Natural killer cell (primary cell): ENCODE measurements at regions of chr6 and their contacts with region 1.

Region 1: DNA sequence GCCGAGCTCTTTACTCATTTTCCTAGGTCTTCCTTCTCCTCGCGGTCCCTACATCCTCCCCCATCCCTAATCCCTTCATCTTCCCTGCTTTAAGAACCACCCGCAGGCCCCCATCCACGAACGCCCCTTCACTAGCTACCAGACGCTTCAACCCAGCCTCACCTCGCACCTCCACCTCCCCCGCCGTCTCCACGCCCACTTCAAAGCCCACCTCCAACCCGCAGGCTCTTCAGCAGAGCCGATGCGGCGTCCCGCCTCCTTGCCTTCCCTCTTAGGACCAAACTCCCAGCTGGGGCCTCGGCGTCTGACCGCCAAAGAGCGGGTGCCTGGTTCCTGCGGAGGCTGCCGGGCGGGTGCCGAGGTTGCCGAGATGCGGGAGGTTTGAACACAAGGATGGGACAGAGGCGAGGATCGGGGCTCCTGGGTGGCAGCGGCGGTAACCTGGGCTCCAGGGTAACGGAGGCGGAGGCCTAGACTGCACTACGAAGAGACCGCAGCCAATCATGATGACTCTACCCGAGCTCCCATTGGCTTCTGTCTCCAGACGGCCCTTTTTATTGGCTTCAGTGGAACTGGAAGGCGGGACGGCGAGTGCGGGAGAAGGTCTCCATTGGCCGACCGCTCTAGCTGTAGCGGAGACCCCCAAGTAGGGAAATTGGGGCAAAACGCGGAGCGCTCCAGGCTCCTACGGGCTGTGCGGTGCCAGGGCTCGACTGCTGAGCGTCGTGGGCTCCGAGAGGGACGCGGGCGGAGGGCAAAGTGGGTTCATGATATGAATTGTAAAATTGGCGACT is at the start of gene LCA5:
- DNase-seq: peak; percentile 79 to 89
- ATAC-seq: peak; percentile 95 to 96 (median 96)
- H3K4me3 ChIP-seq: peak within 1 kb of the TSS; percentile 60
- H3K4me3 Mint-ChIP-seq: no peak within 1 kb of the TSS
- H3K27ac ChIP-seq: no peak within 1 kb of the TSS
- H3K27ac Mint-ChIP-seq: no peak within 1 kb of the TSS
- H3K4me1 ChIP-seq: peaks cover 14% of the 10 kb centered on the region
- H3K4me1 Mint-ChIP-seq: no peaks in the 10 kb centered on the region
- H3K27me3 ChIP-seq: no peaks in the 10 kb centered on the region
- H3K27me3 Mint-ChIP-seq: peaks cover 7 to 20% of the 10 kb centered on the region in 2 donors
- CTCF ChIP-seq: no peak
- total RNA-seq, gene LCA5: 0.07 TPM in 1 of 3 donors, not detected in the others

Region 2: GRCh38 chr6:79078075-79079025 is 458.8 kb before region 1 on chr6 and contains the start of gene PHIP:
- intact Hi-C with region 1: loop called (anchors 10 kb)
- DNase-seq: peak; percentile 88 to 97
- ATAC-seq: peak; percentile 78 to 92 (median 82)
- H3K4me3 ChIP-seq: peak within 1 kb of the TSS; percentile 100
- H3K4me3 Mint-ChIP-seq: peak within 1 kb of the TSS; percentile 95
- H3K27ac ChIP-seq: peak within 1 kb of the TSS; percentile 99
- H3K27ac Mint-ChIP-seq: peak within 1 kb of the TSS; percentile 93 to 96
- H3K4me1 ChIP-seq: peaks cover 5% of the 10 kb centered on the region
- H3K4me1 Mint-ChIP-seq: peaks cover 31 to 36% of the 10 kb centered on the region in 2 donors
- H3K27me3 ChIP-seq: peaks cover 6% of the 10 kb centered on the region
- H3K27me3 Mint-ChIP-seq: peaks cover 0 to 11% of the 10 kb centered on the region in 2 donors
- CTCF ChIP-seq: no peak
- total RNA-seq, gene PHIP: 38.5 to 45.6 (median 42.5) TPM

Region 3: GRCh38 chr6:79250107-79250514 is 287.0 kb before region 1 on chr6:
- intact Hi-C with region 1: no loop called
- DNase-seq: peak in 1 of 2 donors; percentile 52
- ATAC-seq: no peak
- H3K4me3 ChIP-seq: no peak overlapping the region
- H3K4me3 Mint-ChIP-seq: no peak overlapping the region
- H3K27ac ChIP-seq: no peak overlapping the region
- H3K27ac Mint-ChIP-seq: no peak overlapping the region
- H3K4me1 ChIP-seq: no peaks in the 10 kb centered on the region
- H3K4me1 Mint-ChIP-seq: no peaks in the 10 kb centered on the region
- H3K27me3 ChIP-seq: no peaks in the 10 kb centered on the region
- H3K27me3 Mint-ChIP-seq: no peaks in the 10 kb centered on the region
- CTCF ChIP-seq: peak; percentile 41

Region 4: DNA sequence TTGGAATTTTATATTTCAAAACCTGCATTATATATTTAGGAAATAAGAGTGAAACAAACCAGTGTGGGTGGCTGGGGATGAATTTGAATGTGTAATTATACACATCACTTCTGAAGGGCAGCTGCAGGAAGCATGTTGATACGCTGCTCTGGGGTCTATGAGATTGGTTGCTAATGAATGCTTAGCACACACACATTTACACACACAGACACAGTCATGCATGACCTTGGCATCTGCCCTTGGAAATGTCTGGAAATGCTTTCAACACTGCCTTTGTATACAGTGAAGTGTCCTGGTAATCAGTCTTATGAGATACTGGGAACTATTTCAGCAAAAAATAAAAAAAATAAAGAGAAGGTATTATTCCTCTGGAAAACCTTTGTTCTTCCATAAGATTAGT is 326.9 kb after region 1 on chr6:
- intact Hi-C with region 1: no loop called
- DNase-seq: no peak
- ATAC-seq: no peak
- H3K4me3 ChIP-seq: no peak overlapping the region
- H3K4me3 Mint-ChIP-seq: no peak overlapping the region
- H3K27ac ChIP-seq: no peak overlapping the region
- H3K27ac Mint-ChIP-seq: no peak overlapping the region
- H3K4me1 ChIP-seq: no peaks in the 10 kb centered on the region
- H3K4me1 Mint-ChIP-seq: peaks cover 8 to 9% of the 10 kb centered on the region in 2 donors
- H3K27me3 ChIP-seq: no peaks in the 10 kb centered on the region
- H3K27me3 Mint-ChIP-seq: peaks cover 8 to 29% of the 10 kb centered on the region in 2 donors
- CTCF ChIP-seq: no peak